Left cardiac atrium (tissue), 4 donors: ENCODE measurements at regions of chr19 and their contacts with region 1.

Region 1: GRCh38 chr19:34317311-34317927 is 47.6 kb upstream of the GPI start:
- DNase-seq: no peak
- ATAC-seq: peak in 1 of 2 donors; percentile 59

Region 2: DNA sequence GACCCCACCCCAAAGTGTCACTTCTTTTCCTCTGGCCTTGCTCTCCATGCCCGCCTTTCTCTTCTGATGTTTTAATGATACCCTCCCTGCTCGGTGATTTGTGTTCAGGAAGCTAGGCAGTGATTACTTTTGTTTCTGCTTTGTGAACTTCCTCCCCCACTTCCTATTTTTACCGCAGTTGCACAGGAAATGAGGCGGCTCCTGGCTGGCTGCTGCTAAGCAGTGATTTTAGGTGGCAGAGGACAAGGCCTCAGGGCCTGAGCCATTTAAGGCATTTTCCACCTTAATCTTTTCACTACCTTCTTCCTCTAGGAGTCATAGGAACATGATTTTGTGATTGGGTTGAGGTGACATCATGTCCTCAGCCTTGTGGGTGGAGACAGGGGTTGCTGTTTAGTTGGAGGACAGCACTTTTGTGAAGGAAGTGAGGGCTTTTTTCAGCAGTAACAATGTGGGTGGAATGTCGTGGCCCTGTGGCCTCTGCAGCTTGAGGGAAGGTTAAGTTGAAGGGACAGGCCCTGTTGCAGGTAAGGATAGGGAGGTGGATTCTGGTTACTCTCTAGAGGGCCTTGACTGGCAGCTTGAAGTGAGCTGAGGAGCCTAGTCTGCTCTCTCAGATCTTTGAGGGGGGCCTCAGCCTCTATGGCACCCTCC is 47.3 kb before region 1 on chr19:
- intact Hi-C with region 1: loop called in 1 of 2 experiments (anchors 5 kb)
- DNase-seq: peak; percentile 79
- ATAC-seq: peak; percentile 84 to 85

Region 3: GRCh38 chr19:34461375-34462100 is 144.1 kb after region 1 on chr19:
- intact Hi-C with region 1: no loop called
- DNase-seq: no peak
- ATAC-seq: peak; percentile 75 to 84